CD8-positive, alpha-beta T cell (primary cell): ENCODE measurements at regions of chr20 and their contacts with region 1.

Region 1: GRCh38 chr20:62302341-62303058 is at the start of gene ADRM1:
- DNase-seq: peak; percentile 93 to 98 (median 95)
- ATAC-seq: peak; percentile 85
- H3K4me3 ChIP-seq: peak within 1 kb of the TSS; percentile 79 to 92
- H3K4me3 Mint-ChIP-seq: peak within 1 kb of the TSS; percentile 93
- H3K27ac ChIP-seq: peak within 1 kb of the TSS; percentile 82 to 88
- H3K27ac Mint-ChIP-seq: peak within 1 kb of the TSS; percentile 97
- H3K4me1 ChIP-seq: peaks cover 26% of the 10 kb centered on the region
- H3K4me1 Mint-ChIP-seq: peaks cover 27% of the 10 kb centered on the region
- H3K27me3 ChIP-seq: no peaks in the 10 kb centered on the region
- H3K27me3 Mint-ChIP-seq: no peaks in the 10 kb centered on the region
- CTCF ChIP-seq: peak; percentile 88
- total RNA-seq, gene ADRM1: 52.7 to 52.9 TPM

Region 2: DNA sequence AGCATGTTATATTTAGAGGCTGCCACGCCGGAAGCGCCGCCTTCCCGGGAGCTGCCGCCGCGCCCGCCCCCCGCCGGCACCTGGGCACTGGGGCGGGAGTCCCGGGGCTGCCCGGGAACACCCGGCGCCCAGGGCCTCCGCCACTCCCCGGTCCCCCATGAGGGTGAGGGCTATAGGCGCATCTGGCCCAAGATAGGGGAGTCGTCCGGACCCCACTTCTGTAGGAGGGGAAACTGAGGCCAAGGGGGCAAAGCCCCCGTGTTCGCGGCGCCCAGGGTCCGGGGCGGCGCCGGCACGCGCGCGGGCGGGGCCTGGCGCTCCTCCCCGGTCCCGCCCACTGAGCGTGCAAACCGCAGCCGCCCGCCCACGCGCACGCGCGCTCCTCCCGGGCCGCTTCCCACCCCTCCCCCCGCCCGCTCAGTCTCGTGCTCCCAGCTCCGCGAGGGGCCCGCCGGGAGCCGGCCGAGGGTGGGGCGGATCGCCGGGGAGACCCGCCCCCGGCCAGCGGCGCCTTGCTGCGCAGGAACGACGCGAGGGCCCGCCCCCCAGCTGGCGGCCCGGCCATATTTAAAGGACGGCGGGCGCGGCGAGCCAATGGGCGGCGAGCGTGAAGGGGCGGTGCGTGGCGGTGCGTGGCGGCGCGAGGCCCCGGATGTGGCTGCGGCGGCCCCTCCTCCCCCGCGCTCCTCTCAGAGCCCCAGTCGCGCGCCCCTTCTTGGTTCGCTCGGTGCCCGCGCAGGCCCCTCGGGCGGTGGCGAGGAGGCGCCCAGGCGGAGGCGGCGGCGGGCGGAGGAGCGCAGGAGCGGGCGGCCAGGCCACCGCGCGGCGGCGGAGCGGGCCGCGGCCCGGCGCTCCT is 180.5 kb before region 1 on chr20 and contains the start of gene LSM14B:
- CTCF ChIA-PET with region 1: interaction called, 3 read pairs
- POLR2A ChIA-PET with region 1: no interaction called
- intact Hi-C with region 1: loop called (anchors 1 to 5 kb)
- DNase-seq: peak; percentile 92 to 99 (median 94)
- ATAC-seq: peak; percentile 76
- H3K4me3 ChIP-seq: peak within 1 kb of the TSS; percentile 55 to 86
- H3K4me3 Mint-ChIP-seq: peak within 1 kb of the TSS; percentile 85
- H3K27ac ChIP-seq: peak within 1 kb of the TSS; percentile 78 to 83
- H3K27ac Mint-ChIP-seq: peak within 1 kb of the TSS; percentile 90
- H3K4me1 ChIP-seq: peaks cover 57% of the 10 kb centered on the region
- H3K4me1 Mint-ChIP-seq: peaks cover 62% of the 10 kb centered on the region
- H3K27me3 ChIP-seq: no peaks in the 10 kb centered on the region
- H3K27me3 Mint-ChIP-seq: no peaks in the 10 kb centered on the region
- CTCF ChIP-seq: no peak
- total RNA-seq, gene LSM14B: 58.2 to 64.6 TPM

Region 3: DNA sequence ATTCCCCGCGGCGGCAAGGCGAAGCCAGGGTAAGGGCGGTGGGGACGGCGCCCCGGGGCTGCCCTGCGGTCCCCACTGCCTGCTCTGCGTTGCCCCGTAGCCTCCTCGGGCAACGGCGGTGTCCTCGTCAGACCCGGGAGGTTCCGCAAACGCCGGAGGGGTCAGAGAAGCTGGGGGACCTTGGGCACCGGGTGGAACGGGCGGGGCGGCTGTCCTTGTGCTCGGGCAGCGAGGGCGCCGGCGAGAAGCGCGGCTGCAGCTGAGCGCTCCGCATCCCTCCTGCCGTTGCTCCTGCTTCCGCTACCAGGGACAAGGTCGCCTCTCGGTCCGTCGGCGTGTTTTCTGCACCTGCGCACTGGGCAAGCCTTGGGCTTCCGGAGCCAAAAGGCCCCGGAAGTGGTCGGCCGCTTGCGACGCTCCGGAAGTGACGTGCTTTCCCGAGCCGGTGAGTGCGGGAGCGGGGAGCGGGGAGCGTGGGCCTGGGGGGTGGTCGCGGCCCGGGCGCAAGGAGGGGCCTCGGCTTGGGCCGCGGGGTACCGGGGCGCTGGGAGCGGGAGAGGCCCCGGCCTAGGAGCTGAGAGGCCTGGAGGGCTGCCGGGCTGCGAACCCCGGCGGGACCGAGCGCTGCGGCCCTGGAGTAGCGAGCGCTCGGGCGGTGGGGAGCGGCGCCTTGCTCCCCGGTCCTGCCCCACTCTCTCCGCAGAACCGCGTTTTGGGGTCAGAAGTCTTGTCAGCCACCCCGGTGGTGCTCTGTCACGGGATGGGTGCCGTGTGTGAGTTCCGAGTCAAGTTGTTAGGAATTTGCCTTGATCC is 119.7 kb before region 1 on chr20 and contains the start of gene MTG2:
- CTCF ChIA-PET with region 1: interaction called, 3 read pairs
- POLR2A ChIA-PET with region 1: no interaction called
- intact Hi-C with region 1: loop called (anchors 1 to 2 kb)
- DNase-seq: peak; percentile 85 to 98 (median 95)
- ATAC-seq: peak; percentile 92
- H3K4me3 ChIP-seq: peak within 1 kb of the TSS; percentile 82 to 89
- H3K4me3 Mint-ChIP-seq: peak within 1 kb of the TSS; percentile 95
- H3K27ac ChIP-seq: peak within 1 kb of the TSS; percentile 89 to 93
- H3K27ac Mint-ChIP-seq: peak within 1 kb of the TSS; percentile 98
- H3K4me1 ChIP-seq: peaks cover 17% of the 10 kb centered on the region
- H3K4me1 Mint-ChIP-seq: peaks cover 43% of the 10 kb centered on the region
- H3K27me3 ChIP-seq: no peaks in the 10 kb centered on the region
- H3K27me3 Mint-ChIP-seq: no peaks in the 10 kb centered on the region
- CTCF ChIP-seq: no peak
- total RNA-seq, gene MTG2: 7.7 to 8.8 TPM

Region 4: GRCh38 chr20:62500237-62500864 is 197.9 kb after region 1 on chr20:
- CTCF ChIA-PET with region 1: interaction called, 4 read pairs
- POLR2A ChIA-PET with region 1: no interaction called
- intact Hi-C with region 1: loop called (anchors 5 kb)
- DNase-seq: peak; percentile 62 to 88 (median 82)
- ATAC-seq: peak; percentile 64
- H3K4me3 ChIP-seq: no peak overlapping the region
- H3K4me3 Mint-ChIP-seq: no peak overlapping the region
- H3K27ac ChIP-seq: no peak overlapping the region
- H3K27ac Mint-ChIP-seq: no peak overlapping the region
- H3K4me1 ChIP-seq: peaks cover 7% of the 10 kb centered on the region
- H3K4me1 Mint-ChIP-seq: peaks cover 11% of the 10 kb centered on the region
- H3K27me3 ChIP-seq: no peaks in the 10 kb centered on the region
- H3K27me3 Mint-ChIP-seq: peaks cover 2% of the 10 kb centered on the region
- CTCF ChIP-seq: peak; percentile 76

Region 5: GRCh38 chr20:62642040-62642665 is 339.7 kb after region 1 on chr20 and contains the start of gene SLCO4A1:
- CTCF ChIA-PET with region 1: no interaction called
- POLR2A ChIA-PET with region 1: no interaction called
- intact Hi-C with region 1: loop called in 1 of 2 experiments (anchors 10 kb)
- DNase-seq: peak; percentile 57 to 90 (median 80)
- ATAC-seq: peak; percentile 92
- H3K4me3 ChIP-seq: peak within 1 kb of the TSS; percentile 34 to 59
- H3K4me3 Mint-ChIP-seq: peak within 1 kb of the TSS; percentile 85
- H3K27ac ChIP-seq: no peak within 1 kb of the TSS
- H3K27ac Mint-ChIP-seq: no peak within 1 kb of the TSS
- H3K4me1 ChIP-seq: peaks cover 21% of the 10 kb centered on the region
- H3K4me1 Mint-ChIP-seq: peaks cover 7% of the 10 kb centered on the region
- H3K27me3 ChIP-seq: no peaks in the 10 kb centered on the region
- H3K27me3 Mint-ChIP-seq: peaks cover 2% of the 10 kb centered on the region
- CTCF ChIP-seq: no peak
- total RNA-seq, gene SLCO4A1: 4.5 to 4.7 TPM

Region 6: GRCh38 chr20:62808211-62808865 is 505.8 kb after region 1 on chr20:
- CTCF ChIA-PET with region 1: interaction called, 4 read pairs
- POLR2A ChIA-PET with region 1: no interaction called
- intact Hi-C with region 1: loop called (anchors 1 kb)
- DNase-seq: peak; percentile 58 to 87 (median 78)
- ATAC-seq: peak; percentile 49
- H3K4me3 ChIP-seq: no peak overlapping the region
- H3K4me3 Mint-ChIP-seq: peak overlapping the region; percentile 50
- H3K27ac ChIP-seq: no peak overlapping the region
- H3K27ac Mint-ChIP-seq: peak overlapping the region; percentile 60
- H3K4me1 ChIP-seq: peaks cover 37% of the 10 kb centered on the region
- H3K4me1 Mint-ChIP-seq: peaks cover 29% of the 10 kb centered on the region
- H3K27me3 ChIP-seq: no peaks in the 10 kb centered on the region
- H3K27me3 Mint-ChIP-seq: no peaks in the 10 kb centered on the region
- CTCF ChIP-seq: peak; percentile 95